Dendritic cell treated with granulocyte-macrophage colony-stimulating factor and Interleukin-4, amounts not matched to agents 40 ng/mL and 50 ng/mL, for 4 days (primary cell): ENCODE measurements at regions of chr1 and their contacts with region 1.

Region 1: DNA sequence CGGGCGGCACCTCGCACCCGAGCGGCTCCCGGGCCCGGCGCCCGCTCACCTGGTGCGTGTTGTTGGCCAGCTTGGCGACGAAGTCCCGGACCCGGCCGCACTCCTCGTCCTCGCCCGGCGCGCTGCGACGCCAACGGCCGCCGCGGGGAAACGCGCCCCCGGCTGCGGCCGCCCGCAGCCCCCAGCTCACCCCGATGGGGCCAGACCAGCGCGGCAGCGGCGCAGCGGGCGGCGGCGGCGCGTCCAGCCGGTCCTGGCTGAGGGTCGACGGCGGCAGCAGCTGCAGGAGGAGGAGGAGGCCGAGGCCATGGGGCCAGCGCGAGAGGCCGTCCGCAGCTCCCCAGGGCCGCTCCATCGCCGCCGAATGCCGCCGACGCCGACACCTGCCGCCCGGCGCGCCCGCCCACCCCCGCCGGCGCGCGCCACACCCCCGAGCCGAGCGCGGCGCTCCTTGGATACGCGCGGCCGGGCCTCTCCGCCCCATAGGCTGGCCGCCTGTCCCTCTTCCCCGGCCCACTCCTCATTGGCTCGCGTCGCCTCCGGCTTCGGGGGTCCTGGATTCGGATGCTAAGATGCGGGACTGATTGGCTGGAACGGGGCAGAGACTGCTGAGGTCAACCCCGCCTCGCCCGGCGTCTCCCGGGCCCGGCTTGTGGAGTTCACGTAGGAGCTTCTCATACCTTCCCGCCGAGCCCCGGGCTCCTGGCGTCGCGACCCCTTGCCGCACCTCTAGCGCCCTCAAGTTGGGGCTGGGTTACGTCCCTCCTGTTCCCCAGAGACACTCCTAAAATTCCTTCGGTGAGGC is at the start of gene SORT1:
- H3K4me3 Mint-ChIP-seq: peak within 1 kb of the TSS; percentile 85
- H3K27ac Mint-ChIP-seq: peak within 1 kb of the TSS; percentile 93
- H3K4me1 Mint-ChIP-seq: peaks cover 51% of the 10 kb centered on the region
- H3K27me3 Mint-ChIP-seq: peaks cover 5% of the 10 kb centered on the region

Region 2: DNA sequence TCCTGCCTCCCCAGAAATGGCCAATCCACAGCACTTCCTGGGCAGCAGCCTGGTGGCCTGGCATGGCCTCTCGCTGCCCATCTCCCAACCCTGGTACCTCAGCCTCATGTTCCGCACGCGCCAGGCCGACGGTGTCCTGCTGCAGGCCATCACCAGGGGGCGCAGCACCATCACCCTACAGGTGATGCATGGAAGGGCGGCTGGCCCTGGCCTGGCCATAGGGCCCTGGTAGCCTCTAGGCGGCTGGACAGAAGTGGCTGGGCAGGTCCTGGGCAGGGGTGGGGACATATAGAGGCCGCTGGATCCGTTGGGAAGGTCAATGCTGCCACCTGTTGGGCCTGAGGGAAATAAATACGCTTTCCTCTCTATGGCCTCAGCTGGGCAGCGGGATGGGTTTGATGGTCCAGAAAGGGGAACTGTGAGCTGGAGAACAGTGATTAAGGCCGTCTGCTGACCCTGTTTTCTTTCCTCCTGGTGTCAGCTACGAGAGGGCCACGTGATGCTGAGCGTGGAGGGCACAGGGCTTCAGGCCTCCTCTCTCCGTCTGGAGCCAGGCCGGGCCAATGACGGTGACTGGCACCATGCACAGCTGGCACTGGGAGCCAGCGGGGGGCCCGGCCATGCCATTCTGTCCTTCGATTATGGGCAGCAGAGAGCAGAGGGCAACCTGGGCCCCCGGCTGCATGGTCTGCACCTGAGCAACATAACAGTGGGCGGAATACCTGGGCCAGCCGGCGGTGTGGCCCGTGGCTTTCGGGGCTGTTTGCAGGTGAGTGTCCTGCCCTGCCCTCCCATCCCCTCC is 133.9 kb before region 1 on chr1:
- intact Hi-C with region 1: loop called (anchors 1 kb)
- H3K4me3 Mint-ChIP-seq: no peak overlapping the region
- H3K27ac Mint-ChIP-seq: no peak overlapping the region
- H3K4me1 Mint-ChIP-seq: peaks cover 11% of the 10 kb centered on the region
- H3K27me3 Mint-ChIP-seq: peaks cover 15% of the 10 kb centered on the region

Region 3: GRCh38 chr1:109277434-109278204 is 120.1 kb before region 1 on chr1:
- intact Hi-C with region 1: loop called (anchors 1 kb)
- H3K4me3 Mint-ChIP-seq: no peak overlapping the region
- H3K27ac Mint-ChIP-seq: no peak overlapping the region
- H3K4me1 Mint-ChIP-seq: peaks cover 69% of the 10 kb centered on the region
- H3K27me3 Mint-ChIP-seq: peaks cover 4% of the 10 kb centered on the region

Region 4: DNA sequence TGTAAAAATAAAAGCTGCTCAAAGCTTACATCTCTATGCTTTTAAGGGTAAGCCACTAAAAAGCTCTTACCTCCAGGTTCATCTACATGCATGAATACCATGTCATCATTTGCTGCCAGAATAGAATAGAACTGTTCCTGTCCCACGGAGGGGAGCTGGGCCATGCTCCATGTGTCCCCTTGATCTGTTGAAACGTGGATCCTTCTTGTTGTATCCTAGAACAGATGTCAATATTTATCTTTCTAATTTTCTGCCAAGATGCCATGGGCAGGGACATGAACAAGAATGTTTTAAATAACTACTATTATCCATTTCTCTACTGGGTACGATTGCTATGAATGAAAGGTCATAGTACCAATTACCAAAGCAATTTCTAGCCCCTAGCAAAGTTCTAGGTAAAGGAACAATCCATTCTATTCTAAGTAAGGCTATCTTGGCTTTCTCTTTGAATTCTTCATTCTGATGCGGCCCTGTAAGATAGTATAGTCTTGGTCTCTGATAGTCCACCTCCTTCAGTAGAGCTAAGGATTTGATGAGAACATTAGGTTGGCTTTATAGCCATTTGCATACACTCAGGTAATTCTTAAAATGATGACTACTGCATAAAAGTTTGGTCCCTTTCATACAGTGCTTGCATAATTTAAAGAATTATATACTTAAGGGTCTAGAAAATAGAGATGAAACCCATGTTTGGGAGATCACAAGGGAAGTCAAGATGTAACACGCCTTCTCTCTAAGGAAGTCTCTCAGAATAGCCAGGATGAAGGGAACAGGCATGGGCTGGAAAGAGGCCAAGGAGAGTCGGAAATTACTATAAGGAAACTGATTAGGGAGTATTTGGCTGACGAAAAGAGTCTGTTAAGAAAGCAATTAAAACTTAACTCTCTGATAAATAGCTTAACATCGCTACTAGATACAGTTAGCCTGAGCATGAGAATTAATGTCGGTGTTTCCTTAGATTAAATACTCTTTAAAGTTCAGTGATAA is 55.5 kb before region 1 on chr1:
- intact Hi-C with region 1: loop called (anchors 10 kb)
- H3K4me3 Mint-ChIP-seq: no peak overlapping the region
- H3K27ac Mint-ChIP-seq: no peak overlapping the region
- H3K4me1 Mint-ChIP-seq: no peaks in the 10 kb centered on the region
- H3K27me3 Mint-ChIP-seq: no peaks in the 10 kb centered on the region

Region 5: GRCh38 chr1:109361649-109362048 is 36.1 kb before region 1 on chr1:
- intact Hi-C with region 1: loop called (anchors 2 kb)
- H3K4me3 Mint-ChIP-seq: no peak overlapping the region
- H3K27ac Mint-ChIP-seq: peak overlapping the region; percentile 78
- H3K4me1 Mint-ChIP-seq: peaks cover 36% of the 10 kb centered on the region
- H3K27me3 Mint-ChIP-seq: no peaks in the 10 kb centered on the region

Region 6: GRCh38 chr1:109802901-109803561 is 405.3 kb after region 1 on chr1:
- intact Hi-C with region 1: no loop called
- H3K4me3 Mint-ChIP-seq: no peak overlapping the region
- H3K27ac Mint-ChIP-seq: no peak overlapping the region
- H3K4me1 Mint-ChIP-seq: peaks cover 11% of the 10 kb centered on the region
- H3K27me3 Mint-ChIP-seq: peaks cover 16% of the 10 kb centered on the region